HEK293T (cell line): ENCODE measurements at regions of chr14 and their contacts with region 1.

Region 1: GRCh38 chr14:24725311-24725710 is 91.3 kb upstream of the GZMB start:
- DNase-seq: no peak

Region 2: GRCh38 chr14:24595073-24595808 is 130.1 kb before region 1 on chr14:
- CTCF ChIA-PET with region 1: no interaction called
- POLR2A ChIA-PET with region 1: no interaction called
- DNase-seq: no peak

Region 3: DNA sequence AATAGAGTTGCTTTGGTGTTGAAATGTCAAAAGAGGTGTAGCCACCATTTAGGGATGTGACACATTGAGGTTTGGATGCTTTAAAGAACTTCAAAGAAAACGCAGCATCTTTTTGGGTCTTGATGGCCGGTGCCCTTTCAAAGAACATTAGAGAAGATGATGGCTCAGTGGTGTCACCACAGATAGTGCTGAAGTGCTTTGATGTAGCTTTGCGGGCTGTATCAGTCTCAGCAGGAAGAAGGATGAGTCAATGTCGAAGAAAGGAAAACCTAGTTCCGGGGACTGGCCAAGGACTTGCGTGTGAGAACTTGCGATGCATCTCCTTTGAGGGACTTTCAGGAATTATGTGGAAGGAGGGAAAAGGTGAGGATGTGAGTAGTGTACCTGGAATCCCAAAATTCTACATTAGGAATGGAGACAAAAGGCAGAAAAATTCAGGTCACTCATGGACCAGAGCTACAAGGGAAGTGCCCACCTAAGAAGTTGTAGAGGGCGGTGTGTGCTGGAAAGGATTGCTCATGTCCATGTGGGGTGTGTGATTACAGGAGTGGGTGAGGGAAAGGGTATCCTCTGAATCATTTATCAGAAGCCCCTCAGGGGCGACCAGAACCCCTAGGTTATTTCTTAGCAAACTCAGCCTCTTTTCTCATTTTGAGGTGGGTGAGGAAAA is 51.6 kb before region 1 on chr14:
- CTCF ChIA-PET with region 1: no interaction called
- POLR2A ChIA-PET with region 1: no interaction called
- DNase-seq: no peak

Region 4: DNA sequence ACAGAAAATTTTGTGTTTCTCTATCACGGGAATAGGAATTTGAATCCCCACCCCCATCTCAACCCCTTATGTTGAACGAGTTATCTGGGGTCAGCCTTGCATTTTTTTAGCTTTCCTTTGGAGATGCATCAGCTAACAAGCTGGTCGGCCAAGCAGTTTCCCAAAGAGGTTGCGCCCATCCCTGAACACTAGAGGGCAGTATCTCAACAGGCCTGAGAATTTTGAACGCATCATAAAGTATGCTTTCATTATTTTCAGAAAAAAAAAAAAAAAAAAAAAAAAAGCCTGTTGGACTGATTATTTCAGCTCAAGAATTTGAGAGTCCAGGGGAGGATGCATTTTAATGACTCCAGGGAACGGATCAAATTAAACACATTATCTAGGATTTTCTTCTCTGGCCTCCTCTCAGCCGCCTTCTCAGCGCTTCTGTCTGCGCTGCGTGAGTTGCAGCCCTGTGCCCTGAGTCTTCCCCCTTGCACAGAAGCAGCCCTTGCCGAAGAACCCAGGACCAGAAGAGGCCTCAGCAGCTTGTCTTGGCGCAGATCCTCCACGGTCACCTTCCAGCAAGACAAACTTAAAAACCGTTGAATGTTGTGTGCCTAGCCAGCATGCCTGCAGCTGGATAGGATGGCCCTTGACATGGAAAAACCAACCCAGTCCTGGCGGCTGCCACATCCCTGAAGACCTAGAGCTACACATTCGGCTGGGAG is 14.8 kb before region 1 on chr14:
- CTCF ChIA-PET with region 1: interaction called, 12 read pairs
- POLR2A ChIA-PET with region 1: interaction called, 3 read pairs
- DNase-seq: peak; percentile 58